Activated T-helper 1 cell treated with anti-CD3 and anti-CD28 coated beads, Interleukin-12 subunit alpha, Interleukin-12 subunit beta, Interleukin-2, Interleukin-4 antibody, amounts not matched to agents 30 ng/mL and 10 ng/mL and 1 ng/mL, durations not matched to agents 14 hours and 24 hours and 36 hours (primary cell): ENCODE measurements at regions of chr16 and their contacts with region 1.

Region 1: DNA sequence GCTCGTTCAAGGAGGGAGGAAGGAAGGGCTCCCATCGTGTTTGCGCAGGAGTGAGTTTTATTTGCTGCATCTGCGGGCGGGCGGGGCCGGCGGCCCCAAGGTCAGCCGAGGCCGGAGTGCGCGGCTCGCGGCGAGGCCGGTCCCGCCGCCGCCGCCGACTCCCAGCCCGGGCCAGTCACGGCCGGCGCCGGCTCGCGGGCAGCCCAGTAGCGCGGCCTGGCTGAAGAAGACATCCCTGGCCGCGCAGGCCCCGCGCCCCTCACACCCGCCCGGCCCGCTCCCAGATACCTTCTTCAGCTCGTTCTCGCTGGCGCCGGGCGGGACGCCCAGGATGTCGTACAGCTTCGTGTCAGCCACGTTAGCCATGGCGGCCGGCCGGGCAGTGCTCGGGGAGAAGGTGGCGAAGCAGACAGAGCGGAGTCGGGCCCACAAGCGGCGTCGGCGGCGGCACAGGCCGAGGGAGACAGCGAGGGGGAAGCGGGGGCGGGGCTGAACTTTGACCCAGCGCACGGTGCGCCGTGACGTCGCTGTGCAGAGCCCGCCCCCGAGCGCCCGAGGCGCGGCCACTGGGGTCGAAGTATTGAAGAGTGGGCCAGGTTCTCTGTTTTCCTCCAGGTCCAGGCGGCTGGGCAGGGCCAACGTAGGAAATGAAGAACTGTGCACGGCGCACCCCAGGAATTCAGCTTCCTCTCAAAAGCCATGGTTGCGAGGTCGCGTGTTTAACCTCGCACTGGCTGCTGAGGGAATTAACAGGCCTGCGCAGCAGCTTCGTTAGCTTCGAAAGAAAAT is at the start of gene DNAJA2:
- DNase-seq: peak; percentile 86
- H3K4me3 Mint-ChIP-seq: peak within 1 kb of the TSS; percentile 97
- H3K27ac Mint-ChIP-seq: peak within 1 kb of the TSS; percentile 96
- H3K4me1 Mint-ChIP-seq: peaks cover 47% of the 10 kb centered on the region
- H3K27me3 Mint-ChIP-seq: no peaks in the 10 kb centered on the region
- total RNA-seq, gene DNAJA2: 83.6 and 86.3 TPM in 2 replicates

Region 2: GRCh38 chr16:46830902-46831647 is 142.3 kb before region 1 on chr16 and contains the start of gene C16orf87:
- intact Hi-C with region 1: loop called (anchors 1 kb)
- DNase-seq: peak; percentile 90
- H3K4me3 Mint-ChIP-seq: peak within 1 kb of the TSS; percentile 97
- H3K27ac Mint-ChIP-seq: peak within 1 kb of the TSS; percentile 98
- H3K4me1 Mint-ChIP-seq: peaks cover 40% of the 10 kb centered on the region
- H3K27me3 Mint-ChIP-seq: peaks cover 10% of the 10 kb centered on the region
- total RNA-seq, gene C16orf87: 40.8 and 44.5 TPM in 2 replicates

Region 3: DNA sequence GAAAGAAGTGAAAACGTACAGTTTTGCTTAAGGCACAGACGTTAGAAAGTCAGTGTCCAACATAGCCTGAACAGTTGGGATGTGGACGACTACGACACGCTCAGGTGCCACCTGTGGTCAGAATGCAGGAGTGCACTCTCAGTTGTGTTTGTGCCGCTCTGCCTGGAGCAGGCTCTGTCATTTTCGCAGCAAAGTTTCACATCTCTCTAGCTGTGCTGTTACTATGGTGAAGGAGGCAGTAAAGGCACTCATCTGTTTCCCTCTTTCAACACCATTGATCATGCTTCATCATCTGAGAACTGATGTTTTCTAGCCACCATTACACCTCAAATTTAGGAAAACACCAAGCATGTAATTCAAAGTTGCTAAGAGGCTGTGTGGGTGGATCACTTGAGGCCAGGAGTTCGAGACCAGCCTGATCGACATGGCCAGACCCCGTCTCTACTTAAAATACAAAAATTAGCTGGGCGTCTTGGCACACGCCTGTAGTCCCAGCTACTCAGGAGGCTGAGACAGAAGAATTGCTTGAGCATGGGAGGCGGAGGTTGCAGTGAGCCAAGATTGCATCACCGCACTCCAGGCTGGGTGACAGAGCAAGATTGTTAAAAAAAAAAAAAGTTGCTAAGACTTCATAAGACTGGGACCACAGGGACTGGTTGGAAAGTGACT is 45.0 kb after region 1 on chr16:
- intact Hi-C with region 1: loop called (anchors 1 kb)
- DNase-seq: peak; percentile 24
- H3K4me3 Mint-ChIP-seq: no peak overlapping the region
- H3K27ac Mint-ChIP-seq: no peak overlapping the region
- H3K4me1 Mint-ChIP-seq: peaks cover 23% of the 10 kb centered on the region
- H3K27me3 Mint-ChIP-seq: peaks cover 4% of the 10 kb centered on the region

Region 4: GRCh38 chr16:47460711-47461597 is 487.6 kb after region 1 on chr16 and contains the starts of genes ITFG1 and PHKB:
- intact Hi-C with region 1: loop called (anchors 1 kb)
- DNase-seq: peak; percentile 95
- H3K4me3 Mint-ChIP-seq: peak within 1 kb of the TSS; percentile 90
- H3K27ac Mint-ChIP-seq: peak within 1 kb of the TSS; percentile 97
- H3K4me1 Mint-ChIP-seq: peaks cover 51% of the 10 kb centered on the region
- H3K27me3 Mint-ChIP-seq: no peaks in the 10 kb centered on the region
- total RNA-seq, gene ITFG1: 25.4 and 27.6 TPM in 2 replicates
- total RNA-seq, gene PHKB: 24.4 and 26.6 TPM in 2 replicates

Region 5: DNA sequence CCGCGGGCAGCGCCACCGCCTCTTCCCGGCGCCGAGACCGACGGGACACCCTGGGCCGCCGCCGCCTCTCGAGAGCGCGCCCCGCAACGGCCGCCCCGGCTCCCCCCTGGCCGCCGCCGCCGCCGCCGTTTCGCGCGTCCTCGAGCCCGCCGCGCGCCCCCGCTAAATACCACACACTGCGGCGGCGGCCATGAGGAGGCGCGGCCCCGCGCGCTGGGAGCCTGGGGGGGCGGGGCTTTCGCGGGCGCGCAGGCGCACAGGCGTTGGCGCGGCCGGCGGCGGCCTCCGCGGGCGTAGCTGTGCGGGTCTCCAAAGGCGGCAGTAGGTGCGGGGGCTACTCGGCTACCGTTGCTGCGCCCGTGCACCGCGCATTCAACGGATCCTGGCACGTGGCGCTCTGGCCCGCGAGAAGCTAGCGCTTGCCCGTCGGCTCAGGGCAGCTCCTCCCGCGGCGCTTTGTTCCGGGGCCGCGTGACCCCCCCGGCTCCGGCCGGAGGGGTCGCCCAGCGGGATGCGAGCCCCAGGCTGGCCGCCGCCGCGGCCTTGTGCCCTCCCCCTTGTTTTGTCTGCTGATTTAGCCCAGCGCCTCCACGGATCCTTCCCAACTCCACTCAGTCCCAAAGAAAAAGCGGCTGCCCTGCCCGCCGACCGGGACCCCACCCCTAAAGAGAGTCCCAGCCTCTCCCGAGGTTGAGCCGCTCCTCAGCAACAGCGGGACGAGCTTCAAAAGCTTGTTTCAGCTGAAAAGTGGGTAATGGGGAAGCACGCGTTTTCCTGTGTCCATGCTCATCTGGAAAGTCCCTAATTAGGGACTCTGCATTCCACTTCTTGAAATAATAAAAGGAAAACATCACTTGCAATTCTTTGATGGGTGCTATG is 1412.1 kb after region 1 on chr16 and contains the start of gene SIAH1:
- intact Hi-C with region 1: loop called (anchors 10 kb)
- DNase-seq: peak; percentile 85
- H3K4me3 Mint-ChIP-seq: peak within 1 kb of the TSS; percentile 97
- H3K27ac Mint-ChIP-seq: peak within 1 kb of the TSS; percentile 95
- H3K4me1 Mint-ChIP-seq: peaks cover 29% of the 10 kb centered on the region
- H3K27me3 Mint-ChIP-seq: peaks cover 3% of the 10 kb centered on the region
- total RNA-seq, gene SIAH1: 15.6 and 16.8 TPM in 2 replicates